ENCODE measurements at regions of chr10 and their contacts with region 1.

Region 1: DNA sequence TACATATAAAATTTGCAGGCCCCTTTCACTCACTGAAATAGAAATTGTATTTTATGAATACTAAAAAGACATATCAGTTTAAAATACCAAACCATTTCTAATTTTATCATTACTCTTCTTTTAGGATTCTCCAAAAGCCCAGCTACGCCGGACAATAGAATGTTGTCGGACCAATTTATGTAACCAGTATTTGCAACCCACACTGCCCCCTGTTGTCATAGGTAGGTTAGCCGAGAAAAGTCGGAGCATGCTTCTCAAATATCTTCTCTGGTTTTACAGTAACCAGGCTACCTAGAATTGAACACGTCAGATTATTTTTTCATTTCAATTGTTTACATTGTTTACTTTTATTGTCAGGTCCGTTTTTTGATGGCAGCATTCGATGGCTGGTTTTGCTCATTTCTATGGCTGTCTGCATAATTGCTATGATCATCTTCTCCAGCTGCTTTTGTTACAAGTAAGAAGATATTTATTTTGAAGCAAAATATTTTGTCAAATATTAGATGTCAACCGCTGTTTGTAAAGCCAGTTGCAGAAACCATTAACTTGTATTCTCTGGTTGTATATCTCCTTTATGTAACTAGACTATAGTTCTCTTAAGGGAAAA is 57.6 kb downstream of the MMRN2 start:
- DNase-seq: peak in 6 of 9 experiments; percentile 4 to 61 (median 36)
- ATAC-seq: no peak
- H3K4me3 ChIP-seq: no peak overlapping the region
- H3K4me3 Mint-ChIP-seq: no peak overlapping the region
- H3K27ac ChIP-seq: no peak overlapping the region
- H3K27ac Mint-ChIP-seq: no peak overlapping the region
- H3K4me1 ChIP-seq: no peaks in the 10 kb centered on the region
- H3K4me1 Mint-ChIP-seq: peaks cover 2% of the 10 kb centered on the region
- H3K27me3 ChIP-seq: no peaks in the 10 kb centered on the region
- H3K27me3 Mint-ChIP-seq: no peaks in the 10 kb centered on the region
- CTCF ChIP-seq: peak; percentile 62

Region 2: GRCh38 chr10:86599729-86600128 is 300.0 kb before region 1 on chr10:
- CTCF ChIA-PET with region 1: no interaction called
- POLR2A ChIA-PET with region 1: no interaction called
- intact Hi-C with region 1: no loop called
- DNase-seq: no peak
- ATAC-seq: no peak
- H3K4me3 ChIP-seq: no peak overlapping the region
- H3K4me3 Mint-ChIP-seq: no peak overlapping the region
- H3K27ac ChIP-seq: no peak overlapping the region
- H3K27ac Mint-ChIP-seq: no peak overlapping the region
- H3K4me1 ChIP-seq: no peaks in the 10 kb centered on the region
- H3K4me1 Mint-ChIP-seq: peaks cover 3% of the 10 kb centered on the region
- H3K27me3 ChIP-seq: no peaks in the 10 kb centered on the region
- H3K27me3 Mint-ChIP-seq: no peaks in the 10 kb centered on the region
- CTCF ChIP-seq: no peak

Region 3: GRCh38 chr10:86688398-86688921 is 211.3 kb before region 1 on chr10:
- CTCF ChIA-PET with region 1: interaction called, 49 read pairs
- POLR2A ChIA-PET with region 1: no interaction called
- intact Hi-C with region 1: loop called (anchors 1 kb)
- DNase-seq: peak in 8 of 9 experiments; percentile 27 to 73 (median 45)
- ATAC-seq: peak; percentile 92
- H3K4me3 ChIP-seq: no peak overlapping the region
- H3K4me3 Mint-ChIP-seq: no peak overlapping the region
- H3K27ac ChIP-seq: no peak overlapping the region
- H3K27ac Mint-ChIP-seq: no peak overlapping the region
- H3K4me1 ChIP-seq: no peaks in the 10 kb centered on the region
- H3K4me1 Mint-ChIP-seq: peaks cover 7% of the 10 kb centered on the region
- H3K27me3 ChIP-seq: no peaks in the 10 kb centered on the region
- H3K27me3 Mint-ChIP-seq: peaks cover 3% of the 10 kb centered on the region
- CTCF ChIP-seq: peak; percentile 67

Region 4: GRCh38 chr10:86693721-86694369 is 205.9 kb before region 1 on chr10:
- CTCF ChIA-PET with region 1: interaction called, 49 read pairs
- POLR2A ChIA-PET with region 1: no interaction called
- intact Hi-C with region 1: loop called in 1 of 2 experiments (anchors 1 kb)
- DNase-seq: peak in 7 of 9 experiments; percentile 22 to 60 (median 46)
- ATAC-seq: peak; percentile 38
- H3K4me3 ChIP-seq: no peak overlapping the region
- H3K4me3 Mint-ChIP-seq: no peak overlapping the region
- H3K27ac ChIP-seq: no peak overlapping the region
- H3K27ac Mint-ChIP-seq: no peak overlapping the region
- H3K4me1 ChIP-seq: no peaks in the 10 kb centered on the region
- H3K4me1 Mint-ChIP-seq: peaks cover 1% of the 10 kb centered on the region
- H3K27me3 ChIP-seq: no peaks in the 10 kb centered on the region
- H3K27me3 Mint-ChIP-seq: no peaks in the 10 kb centered on the region
- CTCF ChIP-seq: peak; percentile 62

Region 5: GRCh38 chr10:86782701-86783418 is 116.9 kb before region 1 on chr10:
- CTCF ChIA-PET with region 1: no interaction called
- POLR2A ChIA-PET with region 1: no interaction called
- intact Hi-C with region 1: no loop called
- DNase-seq: no peak
- ATAC-seq: no peak
- H3K4me3 ChIP-seq: no peak overlapping the region
- H3K4me3 Mint-ChIP-seq: no peak overlapping the region
- H3K27ac ChIP-seq: no peak overlapping the region
- H3K27ac Mint-ChIP-seq: no peak overlapping the region
- H3K4me1 ChIP-seq: no peaks in the 10 kb centered on the region
- H3K4me1 Mint-ChIP-seq: peaks cover 3% of the 10 kb centered on the region
- H3K27me3 ChIP-seq: no peaks in the 10 kb centered on the region
- H3K27me3 Mint-ChIP-seq: no peaks in the 10 kb centered on the region
- CTCF ChIP-seq: no peak

Measured in CD8-positive, alpha-beta T cell (primary cell).